Colonic mucosa (tissue), 4 donors: ENCODE measurements at regions of chr6 and their contacts with region 1.

Region 1: GRCh38 chr6:85642774-85643536 is at the start of gene SYNCRIP:
- DNase-seq: peak; percentile 99
- H3K4me3 ChIP-seq: peak within 1 kb of the TSS; percentile 96
- H3K27ac ChIP-seq: peak within 1 kb of the TSS; percentile 98
- H3K4me1 ChIP-seq: peaks cover 10% of the 10 kb centered on the region
- H3K27me3 ChIP-seq: no peaks in the 10 kb centered on the region
- CTCF ChIP-seq: no peak
- total RNA-seq, gene SYNCRIP: 87.7 to 99.3 TPM

Region 2: GRCh38 chr6:85551264-85551663 is 91.7 kb before region 1 on chr6:
- intact Hi-C with region 1: no loop called
- DNase-seq: no peak
- H3K4me3 ChIP-seq: no peak overlapping the region
- H3K27ac ChIP-seq: no peak overlapping the region
- H3K4me1 ChIP-seq: no peaks in the 10 kb centered on the region
- H3K27me3 ChIP-seq: no peaks in the 10 kb centered on the region
- CTCF ChIP-seq: no peak

Region 3: GRCh38 chr6:85593438-85594196 is 49.3 kb before region 1 on chr6 and contains the start of gene SNX14:
- intact Hi-C with region 1: loop called (anchors 5 kb)
- DNase-seq: peak; percentile 97
- H3K4me3 ChIP-seq: peak within 1 kb of the TSS; percentile 70
- H3K27ac ChIP-seq: peak within 1 kb of the TSS; percentile 100
- H3K4me1 ChIP-seq: peaks cover 8% of the 10 kb centered on the region
- H3K27me3 ChIP-seq: no peaks in the 10 kb centered on the region
- CTCF ChIP-seq: no peak
- total RNA-seq, gene SNX14: 52.5 to 80.6 TPM

Region 4: GRCh38 chr6:85678602-85679444 is 35.9 kb after region 1 on chr6:
- intact Hi-C with region 1: loop called (anchors 2 kb)
- DNase-seq: peak; percentile 99
- H3K4me3 ChIP-seq: peak overlapping the region; percentile 71
- H3K27ac ChIP-seq: peak overlapping the region; percentile 84
- H3K4me1 ChIP-seq: peaks cover 14% of the 10 kb centered on the region
- H3K27me3 ChIP-seq: no peaks in the 10 kb centered on the region
- CTCF ChIP-seq: no peak

Region 5: DNA sequence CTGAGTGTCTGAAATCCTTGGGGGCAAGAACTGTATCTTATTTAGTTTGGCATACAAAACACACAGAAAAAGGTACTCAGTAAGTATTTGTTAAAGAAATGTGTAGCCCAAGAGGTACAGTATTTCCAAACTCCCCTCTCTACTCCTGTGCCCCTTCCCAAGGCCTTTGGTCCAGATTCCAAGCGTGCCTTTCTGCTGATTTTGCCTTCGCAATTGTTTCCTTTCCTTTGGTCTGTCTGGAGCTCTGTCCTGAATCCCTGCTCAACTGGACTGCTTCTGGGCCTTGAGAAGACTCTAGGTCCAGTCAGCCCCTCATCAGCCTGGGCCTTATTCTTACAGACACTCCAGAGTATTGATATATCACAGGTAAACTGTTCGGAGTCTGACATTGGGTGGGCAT is 121.9 kb after region 1 on chr6:
- intact Hi-C with region 1: no loop called
- DNase-seq: no peak
- H3K4me3 ChIP-seq: no peak overlapping the region
- H3K27ac ChIP-seq: no peak overlapping the region
- H3K4me1 ChIP-seq: no peaks in the 10 kb centered on the region
- H3K27me3 ChIP-seq: no peaks in the 10 kb centered on the region
- CTCF ChIP-seq: no peak